PC-3 (cell line): ENCODE measurements at regions of chr10 and their contacts with region 1.

Region 1: GRCh38 chr10:28179006-28179742 is 123.7 kb downstream of the MPP7 start:
- DNase-seq: peak; percentile 78
- ATAC-seq: peak; percentile 49; the same call in 1 of the 2 replicates
- H3K4me3 ChIP-seq: no peak overlapping the region
- H3K27ac ChIP-seq: no peak overlapping the region
- H3K4me1 ChIP-seq: peaks cover 25% of the 10 kb centered on the region; the same call in 1 of the 2 replicates
- H3K27me3 ChIP-seq: no peaks in the 10 kb centered on the region
- CTCF ChIP-seq: peak; percentile 74

Region 2: DNA sequence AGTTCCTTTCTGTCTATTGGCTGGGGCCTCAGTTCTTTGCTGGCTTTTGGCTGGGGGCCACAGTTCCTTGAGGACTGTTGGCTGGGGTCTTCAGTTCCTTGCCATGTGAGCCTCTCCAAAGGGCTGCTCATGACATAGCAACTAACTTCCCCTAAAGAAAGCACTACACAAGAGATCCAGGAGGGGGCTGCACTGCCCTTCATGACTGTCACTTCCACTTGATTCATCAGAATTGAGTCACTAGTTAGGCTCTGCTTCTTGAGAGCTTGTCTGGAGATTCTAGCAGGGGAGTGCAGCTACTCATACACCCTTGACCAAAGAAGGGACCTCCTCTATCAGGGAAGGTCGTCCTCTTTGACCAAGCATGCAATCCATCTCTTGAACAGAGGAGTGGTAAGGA is 395.5 kb before region 1 on chr10:
- CTCF ChIA-PET with region 1: no interaction called
- POLR2A ChIA-PET with region 1: no interaction called
- intact Hi-C with region 1: loop called (anchors 1 kb)
- DNase-seq: peak; percentile 78
- ATAC-seq: peak; percentile 95
- H3K4me3 ChIP-seq: no peak overlapping the region
- H3K27ac ChIP-seq: no peak overlapping the region
- H3K4me1 ChIP-seq: peaks cover 3% of the 10 kb centered on the region; the same call in 1 of the 2 replicates
- H3K27me3 ChIP-seq: no peaks in the 10 kb centered on the region
- CTCF ChIP-seq: peak; percentile 74

Region 3: DNA sequence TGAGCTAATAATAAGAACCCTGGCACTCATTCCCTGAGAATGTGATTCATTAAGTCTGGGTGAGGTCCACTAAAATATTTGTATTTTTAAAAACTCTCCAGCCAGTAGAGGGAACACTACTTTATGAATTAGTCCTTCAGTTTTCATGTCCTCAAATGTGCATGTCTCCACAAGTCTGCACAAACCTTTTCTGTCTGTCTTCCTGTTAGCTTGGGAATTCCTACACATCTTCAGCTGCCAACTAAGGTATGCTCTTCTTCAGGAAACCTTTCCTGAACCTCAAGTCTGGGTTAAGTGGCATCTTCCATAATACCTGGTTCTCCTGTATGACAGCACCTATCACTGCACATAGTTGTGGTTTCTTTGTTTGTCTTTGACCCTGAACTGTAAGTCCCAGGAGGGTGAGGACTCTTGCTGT is 313.9 kb before region 1 on chr10:
- CTCF ChIA-PET with region 1: no interaction called
- POLR2A ChIA-PET with region 1: no interaction called
- intact Hi-C with region 1: loop called (anchors 10 kb)
- DNase-seq: peak; percentile 52
- ATAC-seq: peak; percentile 60
- H3K4me3 ChIP-seq: no peak overlapping the region
- H3K27ac ChIP-seq: no peak overlapping the region
- H3K4me1 ChIP-seq: peaks cover 13% of the 10 kb centered on the region
- H3K27me3 ChIP-seq: no peaks in the 10 kb centered on the region
- CTCF ChIP-seq: peak; percentile 42

Region 4: DNA sequence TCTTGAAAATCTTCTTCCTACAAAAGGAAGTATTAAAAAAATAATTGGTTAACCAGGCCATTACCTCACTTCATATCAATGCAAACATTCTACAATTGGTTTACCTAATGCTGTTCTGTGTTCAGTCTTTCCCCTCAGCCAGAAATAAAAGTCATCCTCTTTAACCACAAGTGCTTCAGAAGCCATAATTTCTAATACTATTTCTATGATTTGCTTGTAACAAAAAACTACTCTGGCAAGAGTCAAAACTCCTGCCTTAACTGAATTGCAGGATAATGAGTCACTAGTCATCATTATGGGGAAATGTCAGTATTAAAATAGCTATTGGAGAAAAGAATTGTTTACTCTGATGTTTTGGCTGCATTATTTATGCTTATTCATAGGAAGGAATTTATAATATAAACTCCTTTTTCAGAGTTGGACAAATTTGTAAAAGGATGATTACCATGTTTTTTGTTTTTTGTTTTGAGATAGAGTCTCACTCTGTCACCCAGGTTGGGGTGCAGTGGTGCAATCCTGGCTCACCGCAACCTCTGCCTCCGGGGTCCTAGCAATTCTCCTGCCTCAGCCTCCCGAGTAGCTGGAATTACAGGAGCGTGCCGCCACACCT is 124.8 kb before region 1 on chr10:
- CTCF ChIA-PET with region 1: interaction called, 4 read pairs
- POLR2A ChIA-PET with region 1: no interaction called
- intact Hi-C with region 1: loop called (anchors 1 kb)
- DNase-seq: peak; percentile 90
- ATAC-seq: peak; percentile 88
- H3K4me3 ChIP-seq: 0 out of 2 replicates have a peak overlapping the region, but pooled peaks have one; percentile 29
- H3K27ac ChIP-seq: peak overlapping the region; percentile 89
- H3K4me1 ChIP-seq: peaks cover 27% of the 10 kb centered on the region
- H3K27me3 ChIP-seq: no peaks in the 10 kb centered on the region
- CTCF ChIP-seq: no peak

Region 5: GRCh38 chr10:28202941-28203352 is 23.8 kb after region 1 on chr10:
- CTCF ChIA-PET with region 1: interaction called, 8 read pairs
- POLR2A ChIA-PET with region 1: no interaction called
- intact Hi-C with region 1: loop called (anchors 2 kb)
- DNase-seq: peak; percentile 4
- ATAC-seq: no peak
- H3K4me3 ChIP-seq: no peak overlapping the region
- H3K27ac ChIP-seq: peak overlapping the region; percentile 99
- H3K4me1 ChIP-seq: peaks cover 39% of the 10 kb centered on the region
- H3K27me3 ChIP-seq: no peaks in the 10 kb centered on the region
- CTCF ChIP-seq: no peak